CD8-positive, alpha-beta T cell (primary cell): ENCODE measurements at regions of chr19 and their contacts with region 1.

Region 1: GRCh38 chr19:17116996-17117702 is 41.6 kb downstream of the MYO9B start:
- DNase-seq: no peak
- ATAC-seq: no peak
- H3K4me3 ChIP-seq: no peak overlapping the region
- H3K4me3 Mint-ChIP-seq: no peak overlapping the region
- H3K27ac ChIP-seq: peak overlapping the region in 1 of 2 experiments; percentile 6
- H3K27ac Mint-ChIP-seq: peak overlapping the region; percentile 49
- H3K4me1 ChIP-seq: no peaks in the 10 kb centered on the region
- H3K4me1 Mint-ChIP-seq: peaks cover 37% of the 10 kb centered on the region
- H3K27me3 ChIP-seq: no peaks in the 10 kb centered on the region
- H3K27me3 Mint-ChIP-seq: no peaks in the 10 kb centered on the region
- CTCF ChIP-seq: no peak

Region 2: GRCh38 chr19:17058236-17058635 is 58.9 kb before region 1 on chr19:
- CTCF ChIA-PET with region 1: no interaction called
- POLR2A ChIA-PET with region 1: no interaction called
- intact Hi-C with region 1: no loop called
- DNase-seq: no peak
- ATAC-seq: no peak
- H3K4me3 ChIP-seq: no peak overlapping the region
- H3K4me3 Mint-ChIP-seq: no peak overlapping the region
- H3K27ac ChIP-seq: no peak overlapping the region
- H3K27ac Mint-ChIP-seq: no peak overlapping the region
- H3K4me1 ChIP-seq: no peaks in the 10 kb centered on the region
- H3K4me1 Mint-ChIP-seq: no peaks in the 10 kb centered on the region
- H3K27me3 ChIP-seq: no peaks in the 10 kb centered on the region
- H3K27me3 Mint-ChIP-seq: no peaks in the 10 kb centered on the region
- CTCF ChIP-seq: no peak

Region 3: DNA sequence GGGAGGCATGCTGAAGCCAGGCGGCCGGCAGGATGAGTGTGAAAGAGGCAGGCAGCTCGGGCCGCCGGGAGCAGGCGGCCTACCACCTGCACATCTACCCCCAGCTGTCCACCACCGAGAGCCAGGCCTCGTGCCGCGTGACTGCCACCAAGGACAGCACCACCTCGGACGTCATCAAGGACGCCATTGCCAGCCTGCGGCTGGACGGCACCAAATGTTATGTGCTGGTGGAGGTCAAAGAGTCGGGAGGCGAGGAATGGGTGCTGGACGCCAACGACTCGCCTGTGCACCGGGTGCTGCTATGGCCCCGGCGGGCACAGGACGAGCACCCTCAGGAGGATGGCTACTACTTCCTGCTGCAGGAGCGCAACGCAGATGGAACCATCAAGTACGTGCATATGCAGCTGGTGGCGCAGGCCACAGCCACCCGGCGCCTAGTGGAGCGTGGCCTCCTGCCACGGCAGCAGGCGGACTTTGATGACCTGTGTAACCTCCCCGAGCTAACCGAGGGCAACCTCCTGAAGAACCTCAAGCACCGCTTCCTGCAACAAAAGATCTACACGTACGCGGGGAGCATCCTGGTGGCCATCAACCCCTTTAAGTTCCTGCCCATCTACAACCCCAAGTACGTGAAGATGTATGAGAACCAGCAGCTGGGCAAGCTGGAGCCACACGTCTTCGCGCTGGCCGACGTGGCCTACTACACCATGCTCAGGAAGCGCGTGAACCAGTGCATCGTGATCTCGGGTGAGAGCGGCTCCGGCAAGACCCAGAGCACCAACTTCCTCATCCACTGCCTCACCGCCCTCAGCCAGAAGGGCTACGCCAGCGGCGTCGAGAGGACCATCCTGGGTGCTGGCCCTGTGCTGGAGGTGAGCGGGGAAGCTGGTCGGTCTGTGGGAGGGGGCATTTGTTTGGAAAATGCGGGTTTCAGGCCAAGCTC is 15.2 kb before region 1 on chr19:
- CTCF ChIA-PET with region 1: interaction called, 4 read pairs
- POLR2A ChIA-PET with region 1: interaction called, 3 read pairs
- intact Hi-C with region 1: loop called in 1 of 2 experiments (anchors 1 kb)
- DNase-seq: no peak
- ATAC-seq: no peak
- H3K4me3 ChIP-seq: no peak overlapping the region
- H3K4me3 Mint-ChIP-seq: no peak overlapping the region
- H3K27ac ChIP-seq: no peak overlapping the region
- H3K27ac Mint-ChIP-seq: no peak overlapping the region
- H3K4me1 ChIP-seq: no peaks in the 10 kb centered on the region
- H3K4me1 Mint-ChIP-seq: peaks cover 37% of the 10 kb centered on the region
- H3K27me3 ChIP-seq: no peaks in the 10 kb centered on the region
- H3K27me3 Mint-ChIP-seq: no peaks in the 10 kb centered on the region
- CTCF ChIP-seq: no peak